ENCODE measurements at regions of chr5 and their contacts with region 1.

Region 1: GRCh38 chr5:31066655-31067328 is 126.7 kb upstream of the CDH6 start:
- DNase-seq: no peak
- ATAC-seq: no peak

Region 2: DNA sequence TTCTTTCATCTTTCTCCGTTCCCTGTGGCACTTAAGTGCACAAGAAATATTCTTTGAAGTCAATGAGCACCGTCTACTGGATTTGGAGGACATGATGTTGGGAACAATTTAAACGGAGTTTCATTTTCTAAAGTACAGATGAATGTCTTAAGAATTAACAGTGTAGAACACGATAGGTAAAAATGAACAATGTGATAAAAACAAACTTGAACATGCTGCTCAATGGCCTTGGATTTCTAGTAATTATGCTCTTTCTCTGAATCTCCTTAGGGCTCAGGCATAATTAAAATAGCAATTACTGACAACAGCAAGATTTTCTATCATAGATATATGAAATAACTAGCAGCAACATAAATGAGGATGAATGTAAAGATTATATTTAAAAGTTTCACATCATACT is 15.5 kb before region 1 on chr5:
- intact Hi-C with region 1: loop called (anchors 1 kb)
- DNase-seq: no peak
- ATAC-seq: no peak

Measured in sciatic nerve (tissue), 2 donors.